CD4-positive, alpha-beta memory T cell (primary cell): ENCODE measurements at regions of chr17 and their contacts with region 1.

Region 1: GRCh38 chr17:69523244-69523861 is 108.9 kb downstream of the MAP2K6 start:
- DNase-seq: peak in 2 of 5 donors; percentile 0 to 2
- H3K4me3 ChIP-seq: no peak overlapping the region
- H3K4me3 Mint-ChIP-seq: no peak overlapping the region
- H3K27ac ChIP-seq: no peak overlapping the region
- H3K27ac Mint-ChIP-seq: peak overlapping the region in 3 of 7 donors; percentile 7 to 25 (median 8)
- H3K4me1 ChIP-seq: no peaks in the 10 kb centered on the region
- H3K4me1 Mint-ChIP-seq: peaks cover 0 to 4% (median 0%) of the 10 kb centered on the region in 4 donors
- H3K27me3 ChIP-seq: no peaks in the 10 kb centered on the region
- H3K27me3 Mint-ChIP-seq: no peaks in the 10 kb centered on the region

Region 2: DNA sequence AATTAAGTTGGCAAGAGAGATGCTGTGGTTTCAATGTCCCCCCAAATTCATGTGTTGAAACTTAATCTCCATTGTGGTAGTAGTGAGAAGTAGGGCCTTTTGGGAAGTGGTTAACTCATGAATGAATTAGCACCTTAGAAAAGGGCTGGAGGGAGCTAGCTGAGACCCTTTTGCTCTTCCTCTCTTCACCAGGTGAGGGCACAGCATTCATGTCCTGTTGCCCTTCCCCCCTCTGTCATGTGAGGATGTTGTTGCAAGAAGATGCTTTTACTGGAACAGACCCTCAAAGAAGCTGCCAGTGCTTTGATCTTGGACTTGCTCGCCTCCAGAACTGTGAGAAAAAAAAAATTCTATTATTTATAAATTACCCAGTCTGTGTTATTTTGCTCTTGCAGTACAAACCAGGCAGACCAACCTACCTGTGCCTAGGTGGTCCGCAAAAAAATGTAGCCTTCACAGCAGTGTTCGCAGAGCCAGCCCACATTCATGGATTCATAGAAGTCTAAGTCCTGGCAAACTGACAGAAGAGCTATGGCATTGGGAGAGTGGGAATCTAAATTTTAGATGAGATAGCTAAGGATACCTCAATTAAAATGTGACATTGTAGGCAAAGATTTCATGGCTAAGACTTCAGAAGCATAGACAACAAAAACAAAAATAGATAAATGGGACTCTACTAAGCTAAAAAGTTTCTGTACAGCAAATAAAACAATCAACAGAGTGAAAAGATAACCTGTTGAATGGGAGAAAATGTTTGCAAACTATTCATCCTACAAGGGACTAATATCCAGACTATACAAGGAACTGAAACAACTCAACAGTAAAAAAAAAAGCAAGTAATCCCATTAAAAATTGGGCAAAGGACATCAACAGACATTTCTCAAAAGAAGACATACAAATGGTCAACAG is 164.4 kb before region 1 on chr17:
- CTCF ChIA-PET with region 1: interaction called, 3 read pairs
- POLR2A ChIA-PET with region 1: no interaction called
- intact Hi-C with region 1: loop called (anchors 1 kb)
- DNase-seq: peak in 1 of 5 donors; percentile 1
- H3K4me3 ChIP-seq: no peak overlapping the region
- H3K4me3 Mint-ChIP-seq: no peak overlapping the region
- H3K27ac ChIP-seq: no peak overlapping the region
- H3K27ac Mint-ChIP-seq: no peak overlapping the region
- H3K4me1 ChIP-seq: no peaks in the 10 kb centered on the region
- H3K4me1 Mint-ChIP-seq: no peaks in the 10 kb centered on the region
- H3K27me3 ChIP-seq: no peaks in the 10 kb centered on the region
- H3K27me3 Mint-ChIP-seq: peaks cover 4 to 5% of the 10 kb centered on the region in 2 donors

Region 3: DNA sequence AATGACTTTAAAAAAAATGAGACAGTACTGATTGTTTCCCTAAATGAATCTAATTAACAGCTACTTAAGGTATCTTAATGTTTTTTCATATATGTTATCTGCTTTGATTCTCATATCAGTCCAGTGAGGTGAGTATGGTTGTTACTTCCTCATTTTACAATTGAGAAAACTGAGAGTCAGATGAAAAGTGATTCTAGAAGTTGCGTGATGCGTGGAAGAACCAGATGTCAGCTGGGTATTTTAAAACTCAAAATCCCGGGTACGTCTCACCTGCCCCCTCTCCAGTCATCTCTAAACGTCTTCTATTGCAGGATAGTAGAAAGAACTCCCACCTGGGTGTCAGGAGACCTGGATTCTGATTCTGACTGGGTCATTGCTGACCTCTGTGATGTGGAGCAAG is 19.6 kb before region 1 on chr17:
- CTCF ChIA-PET with region 1: interaction called, 10 read pairs
- POLR2A ChIA-PET with region 1: no interaction called
- intact Hi-C with region 1: no loop called
- DNase-seq: no peak
- H3K4me3 ChIP-seq: no peak overlapping the region
- H3K4me3 Mint-ChIP-seq: no peak overlapping the region
- H3K27ac ChIP-seq: no peak overlapping the region
- H3K27ac Mint-ChIP-seq: peak overlapping the region in 2 of 7 donors; percentile 30 to 67
- H3K4me1 ChIP-seq: no peaks in the 10 kb centered on the region
- H3K4me1 Mint-ChIP-seq: peaks cover 6 to 35% (median 19%) of the 10 kb centered on the region in 4 donors
- H3K27me3 ChIP-seq: no peaks in the 10 kb centered on the region
- H3K27me3 Mint-ChIP-seq: no peaks in the 10 kb centered on the region

Region 4: GRCh38 chr17:69511250-69511649 is 12.1 kb before region 1 on chr17:
- CTCF ChIA-PET with region 1: interaction called, 20 read pairs
- POLR2A ChIA-PET with region 1: no interaction called
- intact Hi-C with region 1: no loop called
- DNase-seq: no peak
- H3K4me3 ChIP-seq: no peak overlapping the region
- H3K4me3 Mint-ChIP-seq: no peak overlapping the region
- H3K27ac ChIP-seq: no peak overlapping the region
- H3K27ac Mint-ChIP-seq: peak overlapping the region in 1 of 7 donors; percentile 43
- H3K4me1 ChIP-seq: no peaks in the 10 kb centered on the region
- H3K4me1 Mint-ChIP-seq: peaks cover 0 to 13% (median 7%) of the 10 kb centered on the region in 4 donors
- H3K27me3 ChIP-seq: no peaks in the 10 kb centered on the region
- H3K27me3 Mint-ChIP-seq: no peaks in the 10 kb centered on the region

Region 5: DNA sequence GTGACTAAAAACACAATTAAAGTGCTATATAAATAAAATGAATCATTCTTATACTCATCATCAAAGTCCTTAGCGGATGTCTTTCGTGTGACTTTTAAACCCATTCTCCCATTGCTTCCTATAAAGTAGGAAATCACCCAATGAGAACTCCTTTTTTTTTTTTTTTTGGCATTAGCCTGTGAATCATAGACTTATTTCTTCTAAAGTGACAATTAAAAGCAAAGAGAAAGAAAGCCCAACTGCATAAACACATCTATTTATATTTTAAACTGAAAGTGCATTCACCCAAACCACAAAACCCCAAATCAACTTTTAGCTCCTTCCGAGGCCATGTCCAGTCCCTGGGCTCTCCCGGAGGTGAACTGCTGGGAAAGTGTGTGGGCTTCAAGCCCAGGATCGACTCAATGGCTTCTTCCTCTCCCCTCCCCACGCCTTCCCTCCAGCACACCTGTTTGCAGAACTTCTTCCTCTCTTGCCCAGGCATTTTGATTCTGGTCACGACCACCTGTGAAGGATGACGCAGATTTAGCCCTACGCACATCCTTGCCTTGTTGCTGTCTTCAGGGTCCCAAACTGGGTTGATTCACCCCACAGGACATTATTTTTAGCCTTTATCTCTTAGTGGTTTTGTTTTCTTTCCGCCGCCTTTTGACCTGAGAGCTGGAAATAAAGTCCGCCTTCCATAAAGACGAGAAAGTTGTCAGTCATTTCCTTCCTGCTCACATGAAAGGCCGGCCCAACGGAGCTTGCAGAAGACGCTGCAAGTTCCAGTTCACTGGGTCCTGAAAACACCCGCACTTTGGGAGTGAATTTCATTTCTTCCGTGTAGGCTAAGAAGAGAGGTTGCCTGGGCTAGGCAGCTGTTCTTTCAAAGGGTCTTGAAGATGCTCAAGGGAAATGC is 58.0 kb after region 1 on chr17:
- CTCF ChIA-PET with region 1: no interaction called
- POLR2A ChIA-PET with region 1: no interaction called
- intact Hi-C with region 1: no loop called
- DNase-seq: peak; percentile 10 to 49 (median 29)
- H3K4me3 ChIP-seq: peak overlapping the region in 1 of 2 donors; percentile 2
- H3K4me3 Mint-ChIP-seq: peak overlapping the region; percentile 77 to 90 (median 84)
- H3K27ac ChIP-seq: no peak overlapping the region
- H3K27ac Mint-ChIP-seq: peak overlapping the region in 5 of 7 donors; percentile 38 to 87 (median 67)
- H3K4me1 ChIP-seq: peaks cover 6% of the 10 kb centered on the region
- H3K4me1 Mint-ChIP-seq: peaks cover 3 to 7% (median 5%) of the 10 kb centered on the region in 4 donors
- H3K27me3 ChIP-seq: peaks cover 10% of the 10 kb centered on the region
- H3K27me3 Mint-ChIP-seq: peaks cover 13% of the 10 kb centered on the region in 2 donors